Sigmoid colon (tissue), 7 donors: ENCODE measurements at regions of chr14 and their contacts with region 1.

Region 1: DNA sequence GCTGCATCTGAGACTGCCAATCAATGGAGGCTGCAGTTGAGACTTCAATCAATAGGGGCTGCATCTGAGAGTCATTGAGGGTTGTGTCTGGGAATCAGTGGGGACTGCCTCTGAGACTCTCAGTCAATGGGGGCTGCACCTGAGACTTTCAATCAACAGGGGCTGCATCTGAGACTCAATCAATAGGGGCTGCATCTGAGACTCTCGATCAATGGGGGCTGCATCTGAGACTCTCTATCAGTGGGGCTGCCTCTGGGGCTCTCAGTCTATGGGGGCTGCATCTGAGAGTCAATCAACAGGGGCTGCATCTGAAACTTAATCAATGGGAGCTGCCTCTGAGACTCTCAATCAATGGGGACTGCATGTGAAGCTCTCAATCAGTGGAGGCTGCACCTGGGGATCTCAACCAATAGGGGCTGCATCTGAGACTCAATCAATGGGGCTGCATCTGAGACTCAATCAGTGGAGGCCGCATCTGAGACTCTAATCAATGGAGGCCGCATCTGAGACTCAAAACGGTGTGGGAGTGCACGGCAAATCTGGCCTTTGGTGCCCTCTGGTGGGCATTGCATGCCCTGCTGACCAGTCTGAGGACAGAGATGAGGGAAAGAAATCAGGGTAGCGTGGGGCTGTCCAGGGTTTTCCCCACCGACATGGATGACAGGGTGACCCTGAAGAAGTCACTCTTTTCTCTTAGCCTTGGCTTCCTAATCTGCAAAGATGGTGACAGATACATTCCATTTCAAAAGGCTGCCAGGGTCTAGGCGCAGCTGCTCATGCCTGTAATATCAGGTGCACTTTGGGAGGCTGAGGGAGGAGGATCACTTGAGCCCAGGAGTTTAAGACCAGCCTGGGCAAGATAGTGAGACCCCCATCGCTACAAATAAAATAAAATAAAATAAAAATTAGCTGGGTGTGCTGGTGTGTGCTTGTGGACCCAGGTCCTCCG is 41.3 kb upstream of the EIF5 start:
- DNase-seq: peak; percentile 86
- H3K4me3 ChIP-seq: no peak overlapping the region
- H3K27ac ChIP-seq: no peak overlapping the region
- H3K4me1 ChIP-seq: no peaks in the 10 kb centered on the region
- H3K27me3 ChIP-seq: peaks cover 0 to 34% (median 16%) of the 10 kb centered on the region in 3 donors
- CTCF ChIP-seq: peak; percentile 85 to 93 (median 88)
- EP300 ChIP-seq: no peak
- POLR2A ChIP-seq: no peak

Region 2: GRCh38 chr14:103074699-103075355 is 217.9 kb before region 1 on chr14:
- intact Hi-C with region 1: loop called (anchors 2 kb)
- DNase-seq: peak; percentile 83
- H3K4me3 ChIP-seq: peak overlapping the region in 3 of 4 donors; percentile 38 to 48 (median 40)
- H3K27ac ChIP-seq: peak overlapping the region; percentile 46 to 66 (median 59)
- H3K4me1 ChIP-seq: peaks cover 0 to 13% (median 9%) of the 10 kb centered on the region in 4 donors
- H3K27me3 ChIP-seq: peaks cover 0 to 7% (median 0%) of the 10 kb centered on the region in 3 donors
- CTCF ChIP-seq: no peak
- EP300 ChIP-seq: no peak
- POLR2A ChIP-seq: no peak

Region 3: DNA sequence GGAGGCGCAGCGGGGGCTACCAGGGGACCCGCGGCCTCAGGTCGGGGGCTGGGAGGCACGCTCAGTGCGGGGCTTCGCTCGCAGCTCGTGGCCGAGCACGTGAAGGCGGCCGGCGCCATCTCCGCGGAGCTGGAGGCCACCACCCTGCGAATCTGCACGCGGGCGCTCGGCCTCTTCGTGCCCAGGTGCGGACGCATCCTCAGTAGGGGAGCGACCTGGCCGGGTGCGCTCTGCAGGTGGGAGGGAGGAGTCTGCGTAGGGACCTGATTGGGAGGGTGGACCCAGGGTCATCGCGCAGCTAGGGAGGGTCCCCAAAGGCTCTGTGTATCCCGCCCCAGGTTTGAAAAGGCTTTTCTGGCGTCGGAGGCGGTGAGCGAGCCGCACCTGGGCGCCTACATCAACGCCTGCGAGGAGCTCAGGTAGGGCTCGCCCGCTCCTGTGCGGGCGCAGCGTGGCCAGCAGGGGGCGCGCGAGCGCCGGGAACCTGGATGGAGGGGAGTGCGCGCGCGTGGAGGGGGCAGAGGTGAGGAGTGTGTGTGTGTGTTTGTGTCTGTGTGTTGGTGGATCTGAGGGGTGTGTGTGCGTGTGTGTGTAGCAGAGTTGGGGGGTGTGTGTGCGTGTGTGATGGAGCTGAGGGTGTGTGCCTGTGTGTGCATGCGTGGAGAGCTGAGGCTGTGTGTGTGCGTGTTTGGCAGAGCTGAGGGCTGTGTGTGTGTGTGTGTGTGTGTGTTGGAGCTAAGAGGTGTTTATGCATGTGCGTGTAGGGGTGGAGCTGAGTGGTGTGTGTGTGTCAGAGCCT is 187.8 kb before region 1 on chr14:
- intact Hi-C with region 1: loop called (anchors 1 kb)
- DNase-seq: no peak
- H3K4me3 ChIP-seq: no peak overlapping the region
- H3K27ac ChIP-seq: no peak overlapping the region
- H3K4me1 ChIP-seq: peaks cover 0 to 38% (median 33%) of the 10 kb centered on the region in 4 donors
- H3K27me3 ChIP-seq: peaks cover 32 to 56% (median 36%) of the 10 kb centered on the region in 3 donors
- CTCF ChIP-seq: peak; percentile 98 to 99 (median 99)
- EP300 ChIP-seq: no peak
- POLR2A ChIP-seq: no peak

Region 4: DNA sequence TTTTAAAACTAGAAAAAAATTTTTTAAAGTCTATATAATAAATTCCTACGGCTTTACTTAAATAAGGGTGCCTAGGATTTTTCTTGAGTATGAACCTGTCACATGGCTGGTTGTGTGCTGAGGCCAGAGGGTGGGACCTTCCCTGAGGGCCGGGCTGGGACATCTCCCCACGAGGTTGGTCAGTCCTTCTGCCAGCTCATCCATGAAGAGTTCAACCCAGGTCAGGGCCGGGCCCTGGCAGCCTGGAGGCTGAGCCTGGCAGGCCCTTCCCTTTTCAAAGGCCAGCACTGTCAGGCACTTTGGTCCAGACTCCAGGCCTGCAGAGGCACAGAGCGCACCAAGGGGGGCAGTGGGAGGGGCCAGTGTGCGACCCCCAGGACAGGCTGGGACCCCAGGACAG is 137.7 kb before region 1 on chr14:
- intact Hi-C with region 1: no loop called
- DNase-seq: peak; percentile 90
- H3K4me3 ChIP-seq: no peak overlapping the region
- H3K27ac ChIP-seq: peak overlapping the region in 1 of 4 donors; percentile 47
- H3K4me1 ChIP-seq: peaks cover 0 to 20% (median 11%) of the 10 kb centered on the region in 4 donors
- H3K27me3 ChIP-seq: no peaks in the 10 kb centered on the region
- CTCF ChIP-seq: no peak
- EP300 ChIP-seq: no peak
- POLR2A ChIP-seq: no peak

Region 5: DNA sequence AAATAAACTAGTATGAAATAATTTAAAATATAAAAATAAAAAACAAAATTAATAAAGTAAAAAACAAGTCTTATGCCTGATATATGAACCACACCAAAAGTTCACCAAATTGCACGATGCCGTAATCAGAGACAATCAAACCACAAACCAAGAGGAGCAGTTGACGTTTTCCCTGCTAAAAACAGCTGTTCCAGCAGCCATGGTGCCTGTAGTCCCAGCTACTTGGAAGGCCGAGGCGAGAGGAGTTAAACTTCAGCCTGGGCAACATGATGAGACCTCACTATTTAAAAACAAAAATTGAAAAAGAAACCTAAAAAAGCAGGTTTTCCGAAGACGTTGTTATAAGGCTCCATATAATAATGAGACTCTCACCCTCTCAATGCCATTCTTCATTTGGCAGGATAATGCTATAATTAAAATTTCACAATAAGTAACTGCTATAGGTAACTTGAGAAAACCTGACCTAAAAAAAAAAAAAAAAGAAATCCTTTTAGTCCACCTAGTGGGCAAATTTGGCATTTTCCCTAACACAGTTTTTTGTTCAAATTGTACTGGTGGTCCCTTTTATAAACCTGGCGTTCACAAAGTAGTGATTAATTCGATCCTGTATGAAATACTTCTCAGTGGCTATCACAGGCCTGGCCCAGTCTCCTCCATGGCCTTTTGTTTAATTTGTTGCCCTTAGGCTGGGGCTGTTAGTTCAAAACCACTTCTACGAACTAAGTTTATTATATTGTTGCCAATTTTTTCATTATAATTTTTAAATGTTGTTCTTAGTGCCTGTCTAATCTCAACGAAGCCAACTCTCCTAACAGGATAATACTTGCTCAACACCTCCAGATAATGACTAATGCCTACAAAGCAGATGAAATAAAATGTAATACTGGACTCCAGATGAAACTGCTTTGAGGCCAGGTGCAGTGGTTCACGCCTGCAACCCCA is 107.4 kb before region 1 on chr14:
- intact Hi-C with region 1: loop called (anchors 5 kb)
- DNase-seq: peak; percentile 41
- H3K4me3 ChIP-seq: no peak overlapping the region
- H3K27ac ChIP-seq: peak overlapping the region in 2 of 4 donors; percentile 28 to 37
- H3K4me1 ChIP-seq: peaks cover 0 to 11% (median 9%) of the 10 kb centered on the region in 4 donors
- H3K27me3 ChIP-seq: peaks cover 7 to 36% (median 11%) of the 10 kb centered on the region in 3 donors
- CTCF ChIP-seq: peak in 3 of 4 experiments; percentile 58 to 67 (median 61)
- EP300 ChIP-seq: no peak
- POLR2A ChIP-seq: no peak

Region 6: GRCh38 chr14:103260620-103261124 is 32.0 kb before region 1 on chr14:
- intact Hi-C with region 1: no loop called
- DNase-seq: peak; percentile 74
- H3K4me3 ChIP-seq: peak overlapping the region; percentile 27 to 60 (median 54)
- H3K27ac ChIP-seq: peak overlapping the region; percentile 61 to 81 (median 76)
- H3K4me1 ChIP-seq: peaks cover 0 to 12% (median 6%) of the 10 kb centered on the region in 4 donors
- H3K27me3 ChIP-seq: no peaks in the 10 kb centered on the region
- CTCF ChIP-seq: no peak
- EP300 ChIP-seq: no peak
- POLR2A ChIP-seq: no peak

Region 7: GRCh38 chr14:103279137-103280025 is 13.3 kb before region 1 on chr14:
- intact Hi-C with region 1: no loop called
- DNase-seq: peak; percentile 69
- H3K4me3 ChIP-seq: peak overlapping the region; percentile 10 to 41 (median 32)
- H3K27ac ChIP-seq: peak overlapping the region; percentile 1 to 52 (median 32)
- H3K4me1 ChIP-seq: peaks cover 0 to 18% (median 17%) of the 10 kb centered on the region in 4 donors
- H3K27me3 ChIP-seq: peaks cover 12 to 75% (median 55%) of the 10 kb centered on the region in 3 donors
- CTCF ChIP-seq: no peak
- EP300 ChIP-seq: no peak
- POLR2A ChIP-seq: no peak

Region 8: GRCh38 chr14:103562429-103563225 is 269.9 kb after region 1 on chr14 and contains the starts of genes BAG5 and COA8:
- intact Hi-C with region 1: no loop called
- DNase-seq: peak; percentile 88
- H3K4me3 ChIP-seq: peak within 1 kb of the TSS; percentile 68 to 95 (median 92)
- H3K27ac ChIP-seq: peak within 1 kb of the TSS; percentile 91 to 98 (median 96)
- H3K4me1 ChIP-seq: peaks cover 0 to 62% (median 59%) of the 10 kb centered on the region in 4 donors
- H3K27me3 ChIP-seq: no peaks in the 10 kb centered on the region
- CTCF ChIP-seq: no peak
- EP300 ChIP-seq: no peak
- POLR2A ChIP-seq: peak; percentile 54 to 72
- total RNA-seq, gene BAG5: 18.6 to 27.1 (median 24.9) TPM
- total RNA-seq, gene COA8: 35.7 to 39.0 (median 37.5) TPM